HEK293 (cell line): ENCODE measurements at regions of chr9 and their contacts with region 1.

Region 1: DNA sequence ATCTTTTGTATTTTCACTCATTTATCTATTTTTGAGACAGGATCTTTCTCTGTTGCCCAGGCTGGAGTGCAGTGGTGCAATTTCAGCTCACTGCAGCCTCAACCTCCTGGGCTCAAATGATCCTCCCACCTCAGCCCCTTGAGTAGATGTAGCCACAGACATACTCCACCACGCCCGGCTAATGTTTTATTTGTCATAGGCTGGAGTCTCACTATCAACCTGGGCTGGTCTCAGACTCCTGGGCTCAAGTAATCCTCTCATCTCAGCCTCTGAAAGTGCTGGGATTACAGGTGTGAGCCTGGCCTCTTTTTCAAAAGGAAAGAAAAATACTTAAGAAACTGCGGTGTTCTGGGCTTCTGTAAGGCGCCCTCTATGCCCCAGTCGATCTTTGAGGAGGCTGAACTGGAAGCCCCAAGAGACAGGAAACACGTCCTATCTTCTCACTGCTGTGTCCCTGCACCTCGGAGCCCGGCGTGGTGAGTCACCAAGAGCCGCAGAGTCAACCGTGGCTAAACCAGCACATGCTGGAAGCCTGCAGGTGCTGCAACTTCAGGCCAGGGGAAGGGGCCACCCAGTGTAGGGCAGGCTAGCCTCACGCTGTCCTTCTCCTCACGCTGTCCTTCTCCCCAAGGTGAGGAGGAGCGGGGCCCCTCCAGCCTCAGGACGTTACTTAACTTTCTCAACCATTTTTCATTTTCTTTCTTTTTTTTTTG is 15.2 kb upstream of the LHX3 start:
- H3K4me3 ChIP-seq: no peak overlapping the region
- H3K27ac ChIP-seq: no peak overlapping the region
- H3K4me1 ChIP-seq: no peaks in the 10 kb centered on the region
- CTCF ChIP-seq: no peak

Region 2: DNA sequence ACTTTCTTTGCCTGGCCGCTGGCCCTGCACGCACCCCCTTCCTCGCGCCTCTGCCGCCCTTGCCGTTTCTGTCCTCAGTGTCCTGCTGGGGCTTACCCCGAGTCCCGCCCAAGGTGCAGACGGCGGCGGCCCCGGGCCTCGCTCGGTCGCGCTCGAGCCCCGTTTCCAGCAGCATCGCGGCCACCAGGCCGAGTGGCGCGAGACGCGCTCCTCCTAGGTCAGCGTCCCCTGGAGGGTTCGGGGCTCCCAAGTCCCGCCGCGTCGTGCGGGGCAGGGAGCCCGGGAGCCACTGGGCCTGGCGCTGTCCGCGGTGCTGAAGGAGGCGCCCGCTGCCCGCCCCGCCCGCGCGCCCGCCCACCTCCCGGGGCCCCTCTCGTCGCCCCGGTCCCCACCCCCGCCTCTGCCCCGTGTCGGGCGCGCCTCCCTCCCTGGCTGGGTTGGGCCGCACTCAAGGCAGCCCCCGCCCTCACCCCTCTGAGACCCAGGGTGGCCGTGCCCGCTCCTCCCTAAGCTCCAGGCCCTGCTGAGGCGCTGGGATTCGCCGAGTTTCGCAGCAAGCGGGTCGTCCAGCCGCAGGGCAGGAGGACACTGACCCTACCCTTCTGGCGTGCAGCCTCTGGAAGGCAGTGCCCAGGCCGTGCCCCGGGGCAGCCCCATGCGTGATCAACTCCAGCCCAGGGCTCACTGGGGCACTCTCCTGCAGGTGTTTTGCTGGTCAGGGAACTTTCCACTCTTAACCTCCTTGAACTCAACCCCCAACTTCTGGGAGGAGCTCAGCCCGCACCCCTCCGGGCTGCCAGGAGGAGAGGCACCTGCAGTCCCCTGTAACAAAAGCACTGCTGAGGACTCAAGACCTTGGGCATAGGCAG is 15.1 kb before region 1 on chr9 and contains the start of gene LHX3:
- CTCF ChIA-PET with region 1: interaction called, 10 read pairs
- POLR2A ChIA-PET with region 1: no interaction called
- H3K4me3 ChIP-seq: no peak within 1 kb of the TSS
- H3K27ac ChIP-seq: no peak within 1 kb of the TSS
- H3K4me1 ChIP-seq: no peaks in the 10 kb centered on the region
- CTCF ChIP-seq: no peak